Dorsolateral prefrontal cortex (tissue), 120 donors: ENCODE measurements at regions of chr4 and their contacts with region 1.

Region 1: DNA sequence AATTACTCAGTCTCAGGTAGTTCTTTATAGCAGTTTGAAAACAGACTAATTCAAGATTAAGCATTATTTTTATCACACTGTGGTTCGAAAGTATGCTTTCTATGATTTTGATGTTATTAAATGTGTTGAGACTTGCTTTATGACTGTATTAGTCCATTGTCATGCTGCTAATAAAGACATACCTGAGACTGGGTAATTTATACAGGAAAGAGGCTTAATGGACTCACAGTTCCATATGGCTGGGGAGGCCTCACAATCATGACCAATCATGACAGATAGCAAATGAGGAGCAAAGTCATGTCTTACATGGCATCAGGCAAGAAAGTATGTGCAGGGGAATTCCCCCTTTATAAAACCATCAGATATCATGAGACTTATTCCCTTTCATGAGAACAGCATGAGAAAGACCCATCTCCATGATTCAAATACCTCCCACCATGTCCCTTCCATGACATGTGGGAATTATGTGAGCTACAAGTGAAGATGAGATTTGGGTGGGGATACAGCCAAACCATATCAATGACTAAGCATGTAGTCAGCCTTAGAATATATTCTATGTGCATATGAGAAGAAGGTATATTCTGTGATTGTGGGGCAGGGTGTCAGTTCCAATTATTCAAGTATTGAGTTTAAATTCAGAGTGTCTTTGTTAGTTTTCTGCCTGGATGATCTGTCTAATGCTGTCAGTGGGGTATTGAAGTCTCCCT is 44.6 kb upstream of the UGT2A1 start:
- DNase-seq: no peak
- H3K4me3 ChIP-seq: no peak overlapping the region
- H3K27ac ChIP-seq: no peak overlapping the region
- H3K27me3 ChIP-seq: no peaks in the 10 kb centered on the region
- CTCF ChIP-seq: no peak

Region 2: GRCh38 chr4:69749771-69750170 is 52.1 kb after region 1 on chr4:
- intact Hi-C with region 1: no loop called
- DNase-seq: no peak
- H3K4me3 ChIP-seq: no peak overlapping the region
- H3K27ac ChIP-seq: no peak overlapping the region
- H3K27me3 ChIP-seq: peaks cover 0 to 6% (median 0%) of the 10 kb centered on the region in 45 donors
- CTCF ChIP-seq: no peak

Region 3: GRCh38 chr4:69881173-69881773 is 183.6 kb after region 1 on chr4:
- intact Hi-C with region 1: loop called in 1 of 2 experiments (anchors 10 kb)
- DNase-seq: peak in 3 of 10 donors; percentile 6 to 40 (median 17)
- H3K4me3 ChIP-seq: no peak overlapping the region
- H3K27ac ChIP-seq: no peak overlapping the region
- H3K27me3 ChIP-seq: peaks cover 0 to 6% (median 0%) of the 10 kb centered on the region in 45 donors
- CTCF ChIP-seq: peak; percentile 28 to 94 (median 76)

Region 4: GRCh38 chr4:70505151-70505748 is 807.6 kb after region 1 on chr4:
- intact Hi-C with region 1: loop called in 1 of 2 experiments (anchors 10 kb)
- DNase-seq: peak; percentile 16 to 79 (median 60)
- H3K4me3 ChIP-seq: no peak overlapping the region
- H3K27ac ChIP-seq: no peak overlapping the region
- H3K27me3 ChIP-seq: peaks cover 0 to 19% (median 3%) of the 10 kb centered on the region in 45 donors
- CTCF ChIP-seq: peak; percentile 72 to 98 (median 90)